Colonic mucosa (tissue), 4 donors: ENCODE measurements at regions of chr5 and their contacts with region 1.

Region 1: GRCh38 chr5:74648835-74649293 is 8.3 kb upstream of the ENC1 start:
- DNase-seq: no peak
- H3K4me3 ChIP-seq: no peak overlapping the region
- H3K27ac ChIP-seq: no peak overlapping the region
- H3K4me1 ChIP-seq: no peaks in the 10 kb centered on the region
- H3K27me3 ChIP-seq: no peaks in the 10 kb centered on the region
- CTCF ChIP-seq: peak; percentile 60

Region 2: DNA sequence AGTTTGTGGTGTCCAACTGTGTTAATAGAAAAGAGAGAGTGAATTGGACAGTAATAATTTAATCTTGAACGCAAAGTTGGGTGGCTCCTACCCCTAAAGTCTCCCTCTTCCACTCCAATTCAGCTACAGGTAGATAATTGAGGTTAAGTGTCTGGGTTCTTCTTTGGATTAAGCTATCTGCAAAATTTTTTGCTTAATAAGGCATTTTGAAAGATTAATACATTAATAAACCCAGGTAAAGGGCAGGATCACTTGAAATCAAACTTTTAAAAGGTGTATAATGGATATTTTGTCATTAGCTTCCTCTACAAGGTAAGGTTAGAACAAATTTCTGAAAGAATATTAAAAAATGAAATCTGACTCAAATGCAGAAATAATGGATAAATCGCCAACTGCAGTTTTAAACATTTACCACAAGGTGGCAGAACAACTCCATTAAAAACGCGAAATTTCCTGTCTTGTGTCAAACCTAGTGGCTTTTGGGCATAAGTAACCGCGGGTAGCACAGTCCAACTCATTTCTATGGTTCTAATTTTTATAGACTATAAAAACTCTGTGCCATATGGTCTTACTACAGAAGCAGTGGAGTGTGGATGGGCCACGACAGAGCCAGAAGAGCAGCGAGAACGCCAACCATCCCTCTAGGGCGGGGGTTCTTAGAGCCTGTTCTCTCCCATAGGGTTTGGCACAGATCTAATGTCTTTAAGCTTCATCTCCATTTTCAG is 746.4 kb before region 1 on chr5:
- intact Hi-C with region 1: loop called (anchors 2 kb)
- DNase-seq: no peak
- H3K4me3 ChIP-seq: no peak overlapping the region
- H3K27ac ChIP-seq: no peak overlapping the region
- H3K4me1 ChIP-seq: no peaks in the 10 kb centered on the region
- H3K27me3 ChIP-seq: no peaks in the 10 kb centered on the region
- CTCF ChIP-seq: peak; percentile 84

Region 3: DNA sequence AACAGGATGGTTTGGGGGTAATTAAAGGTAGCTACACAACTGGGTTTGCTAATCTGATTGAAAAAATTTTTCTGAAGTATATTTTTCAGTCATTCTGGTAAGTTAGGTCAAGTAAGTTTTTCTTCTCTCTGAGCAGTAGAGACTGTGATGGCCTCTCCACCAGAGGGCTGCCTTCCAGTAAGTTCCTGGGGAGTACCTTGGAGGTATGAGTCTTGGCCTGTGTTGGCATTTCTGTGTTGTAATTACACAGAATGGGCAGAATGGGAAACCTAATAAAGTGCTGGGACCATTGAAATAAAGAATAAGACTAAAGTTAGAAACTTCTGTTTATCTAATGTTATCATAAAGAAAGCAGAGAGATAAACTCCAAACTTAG is 592.1 kb before region 1 on chr5:
- intact Hi-C with region 1: loop called (anchors 5 kb)
- DNase-seq: peak; percentile 36
- H3K4me3 ChIP-seq: no peak overlapping the region
- H3K27ac ChIP-seq: no peak overlapping the region
- H3K4me1 ChIP-seq: no peaks in the 10 kb centered on the region
- H3K27me3 ChIP-seq: no peaks in the 10 kb centered on the region
- CTCF ChIP-seq: peak; percentile 20

Region 4: DNA sequence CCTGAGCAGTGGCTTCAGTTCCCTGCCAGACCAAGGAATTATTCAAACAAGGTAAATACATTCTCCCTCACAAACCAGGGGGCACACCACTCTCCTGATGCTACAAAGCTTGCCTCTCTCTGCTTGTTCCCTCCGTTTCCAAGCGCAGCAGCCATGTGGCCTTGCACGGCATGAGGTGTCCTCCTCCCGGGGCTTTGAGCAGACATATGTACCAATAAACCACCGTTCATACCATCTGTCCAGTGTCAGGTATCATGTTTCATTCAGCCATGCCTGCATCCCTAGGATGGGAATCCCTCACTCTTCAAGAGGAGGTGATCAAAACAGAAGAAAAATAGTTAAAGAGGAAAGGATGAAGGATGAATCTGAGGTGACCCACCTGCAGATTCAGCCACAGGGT is 291.0 kb before region 1 on chr5:
- intact Hi-C with region 1: no loop called
- DNase-seq: no peak
- H3K4me3 ChIP-seq: no peak overlapping the region
- H3K27ac ChIP-seq: no peak overlapping the region
- H3K4me1 ChIP-seq: peaks cover 5% of the 10 kb centered on the region
- H3K27me3 ChIP-seq: no peaks in the 10 kb centered on the region
- CTCF ChIP-seq: no peak

Region 5: GRCh38 chr5:74433255-74433895 is 215.5 kb before region 1 on chr5:
- intact Hi-C with region 1: no loop called
- DNase-seq: no peak
- H3K4me3 ChIP-seq: no peak overlapping the region
- H3K27ac ChIP-seq: no peak overlapping the region
- H3K4me1 ChIP-seq: no peaks in the 10 kb centered on the region
- H3K27me3 ChIP-seq: no peaks in the 10 kb centered on the region
- CTCF ChIP-seq: no peak